ENCODE measurements at regions of chr21 and their contacts with region 1.

Region 1: DNA sequence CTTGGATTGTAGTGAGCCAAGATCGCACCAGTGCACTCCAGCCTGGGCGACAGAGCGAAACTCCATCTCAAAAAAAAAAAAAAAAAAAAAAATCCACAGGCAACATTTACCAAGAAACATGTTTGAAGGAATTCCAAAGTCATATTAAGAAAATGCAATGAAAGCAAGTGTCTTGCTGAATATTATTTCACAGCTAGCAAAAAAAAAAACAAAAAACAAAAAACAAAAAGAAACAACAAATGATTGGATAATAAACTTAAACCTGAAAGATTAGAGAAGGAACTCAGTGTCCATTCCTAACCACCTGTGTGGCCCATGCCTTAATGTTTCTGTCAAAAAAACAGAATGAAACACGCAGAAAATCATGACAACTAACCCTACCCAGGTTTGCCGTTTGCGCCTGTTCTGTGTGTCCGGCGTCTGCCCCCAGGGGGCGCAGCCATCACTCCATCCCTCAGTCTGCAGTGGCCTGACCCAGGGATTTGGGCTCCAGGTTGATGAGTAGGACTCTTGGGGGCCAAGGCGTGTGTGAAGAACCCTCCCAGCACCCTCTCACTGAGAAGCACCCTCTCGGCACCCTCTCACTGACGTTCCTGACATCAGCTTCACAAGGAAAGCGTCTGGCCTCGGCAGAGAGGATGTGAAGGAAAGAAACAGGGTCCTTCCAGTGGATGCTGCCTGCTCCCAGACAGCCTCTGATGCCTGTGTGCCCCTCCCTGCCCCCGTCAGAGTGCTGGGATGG is 19.2 kb upstream of the PTTG1IP start:
- DNase-seq: peak; percentile 82
- ATAC-seq: peak; percentile 89
- H3K4me3 ChIP-seq: no peak overlapping the region
- H3K4me3 Mint-ChIP-seq: no peak overlapping the region
- H3K27ac ChIP-seq: no peak overlapping the region
- H3K27ac Mint-ChIP-seq: no peak overlapping the region
- H3K4me1 ChIP-seq: peaks cover 3 to 16% of the 10 kb centered on the region in 2 donors
- H3K4me1 Mint-ChIP-seq: peaks cover 27% of the 10 kb centered on the region
- H3K27me3 ChIP-seq: no peaks in the 10 kb centered on the region
- H3K27me3 Mint-ChIP-seq: no peaks in the 10 kb centered on the region
- CTCF ChIP-seq: peak; percentile 89

Region 2: DNA sequence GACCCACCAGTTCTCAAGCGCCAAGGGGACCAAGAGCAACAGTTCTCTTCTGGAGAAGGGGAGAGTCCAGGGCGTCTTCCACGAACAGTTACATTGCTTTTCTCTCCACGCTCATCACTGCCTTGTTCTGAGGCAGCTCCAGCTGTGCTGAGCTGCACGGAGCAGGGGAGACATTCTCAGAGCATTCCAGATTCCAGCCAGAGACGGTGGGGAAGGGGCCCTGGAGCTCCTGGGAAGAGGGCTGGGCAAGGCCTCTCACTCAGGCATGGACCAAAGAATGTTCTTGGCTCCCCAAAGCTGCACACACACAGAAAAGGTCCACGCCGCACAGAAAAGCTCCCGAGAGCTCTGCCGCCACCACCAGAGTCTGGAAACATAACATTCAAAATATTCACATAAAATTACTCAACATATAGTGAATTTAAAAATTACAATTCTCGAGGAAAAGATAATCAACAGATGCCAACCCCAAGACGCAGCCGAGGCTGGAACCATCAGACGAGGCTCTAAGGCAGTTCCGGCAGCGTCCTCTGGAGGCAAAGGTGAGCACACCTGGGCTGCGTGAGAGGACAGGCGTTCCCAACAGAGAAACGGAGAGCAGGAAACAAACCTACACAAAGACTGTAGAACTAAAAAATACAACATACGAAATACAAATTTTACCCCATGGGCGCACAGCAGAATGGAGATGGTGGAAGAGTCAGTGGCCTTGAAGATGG is 131.5 kb before region 1 on chr21:
- CTCF ChIA-PET with region 1: no interaction called
- POLR2A ChIA-PET with region 1: no interaction called
- intact Hi-C with region 1: no loop called
- DNase-seq: no peak
- ATAC-seq: no peak
- H3K4me3 ChIP-seq: no peak overlapping the region
- H3K4me3 Mint-ChIP-seq: no peak overlapping the region
- H3K27ac ChIP-seq: no peak overlapping the region
- H3K27ac Mint-ChIP-seq: no peak overlapping the region
- H3K4me1 ChIP-seq: peaks cover 0 to 5% of the 10 kb centered on the region in 2 donors
- H3K4me1 Mint-ChIP-seq: peaks cover 5% of the 10 kb centered on the region
- H3K27me3 ChIP-seq: no peaks in the 10 kb centered on the region
- H3K27me3 Mint-ChIP-seq: no peaks in the 10 kb centered on the region
- CTCF ChIP-seq: no peak

Region 3: DNA sequence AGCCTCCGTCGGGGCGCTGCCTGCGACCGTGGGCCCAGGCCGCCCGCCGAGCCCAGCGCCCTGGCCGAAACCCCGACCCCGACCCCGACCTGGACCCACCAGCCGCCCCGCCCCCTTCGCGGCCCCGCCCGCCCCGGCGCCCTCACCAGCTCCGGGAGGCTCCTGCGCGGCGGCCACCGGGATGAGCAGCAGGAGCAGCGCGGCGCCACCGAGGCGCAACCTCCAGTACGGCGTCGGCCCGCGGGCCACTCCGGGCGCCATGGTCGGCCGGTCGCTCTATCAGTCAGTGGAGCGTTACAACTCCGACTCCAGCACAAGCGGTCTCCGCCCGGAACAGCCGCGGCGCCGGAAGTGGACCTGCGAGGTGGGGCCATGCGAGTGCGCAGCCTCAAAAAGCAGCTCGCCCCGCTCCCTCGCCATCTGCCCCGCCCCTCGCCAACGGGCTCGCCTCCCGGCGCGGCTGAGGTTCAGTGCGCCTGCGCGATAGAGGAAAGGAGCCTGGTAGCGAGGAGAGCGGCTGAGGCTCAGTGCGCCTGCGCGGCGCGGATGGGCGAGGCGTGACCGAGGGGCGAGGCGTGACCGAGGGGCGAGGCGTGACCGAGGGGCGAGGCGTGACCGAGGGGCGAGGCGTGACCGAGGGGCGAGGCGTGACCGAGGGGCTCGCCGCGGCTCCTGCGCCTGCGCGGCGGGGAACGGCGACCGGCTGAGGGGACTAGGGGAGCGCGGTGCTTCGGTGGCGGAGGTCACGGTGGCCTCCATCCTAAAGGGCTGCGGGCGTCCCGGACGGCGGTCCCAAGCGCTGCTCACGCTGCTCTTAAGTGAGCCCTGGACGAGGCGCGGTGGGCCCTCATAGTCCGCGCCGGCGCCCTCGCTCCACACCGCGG is 19.1 kb before region 1 on chr21 and contains the start of gene PTTG1IP:
- CTCF ChIA-PET with region 1: interaction called, 17 read pairs
- POLR2A ChIA-PET with region 1: interaction called, 3 read pairs
- intact Hi-C with region 1: loop called (anchors 2 kb)
- DNase-seq: peak; percentile 99
- ATAC-seq: peak; percentile 83
- H3K4me3 ChIP-seq: peak within 1 kb of the TSS; percentile 73 to 92 (median 81)
- H3K4me3 Mint-ChIP-seq: peak within 1 kb of the TSS; percentile 92
- H3K27ac ChIP-seq: peak within 1 kb of the TSS; percentile 80 to 93
- H3K27ac Mint-ChIP-seq: peak within 1 kb of the TSS; percentile 98
- H3K4me1 ChIP-seq: peaks cover 50 to 56% of the 10 kb centered on the region in 2 donors
- H3K4me1 Mint-ChIP-seq: peaks cover 60% of the 10 kb centered on the region
- H3K27me3 ChIP-seq: no peaks in the 10 kb centered on the region
- H3K27me3 Mint-ChIP-seq: no peaks in the 10 kb centered on the region
- CTCF ChIP-seq: no peak
- total RNA-seq, gene PTTG1IP: 58.6 and 62.9 TPM in 2 replicates

Region 4: GRCh38 chr21:44880762-44881585 is 11.7 kb before region 1 on chr21:
- CTCF ChIA-PET with region 1: interaction called, 14 read pairs
- POLR2A ChIA-PET with region 1: interaction called, 3 read pairs
- intact Hi-C with region 1: no loop called
- DNase-seq: peak; percentile 60
- ATAC-seq: peak; percentile 31
- H3K4me3 ChIP-seq: no peak overlapping the region
- H3K4me3 Mint-ChIP-seq: peak overlapping the region; percentile 61
- H3K27ac ChIP-seq: peak overlapping the region in 1 of 2 donors; percentile 13
- H3K27ac Mint-ChIP-seq: peak overlapping the region; percentile 62
- H3K4me1 ChIP-seq: peaks cover 45 to 49% of the 10 kb centered on the region in 2 donors
- H3K4me1 Mint-ChIP-seq: peaks cover 43% of the 10 kb centered on the region
- H3K27me3 ChIP-seq: no peaks in the 10 kb centered on the region
- H3K27me3 Mint-ChIP-seq: no peaks in the 10 kb centered on the region
- CTCF ChIP-seq: no peak

Region 5: GRCh38 chr21:44911389-44912157 is 18.9 kb after region 1 on chr21:
- CTCF ChIA-PET with region 1: interaction called, 10 read pairs
- POLR2A ChIA-PET with region 1: interaction called, 5 read pairs
- intact Hi-C with region 1: loop called (anchors 2 kb)
- DNase-seq: peak; percentile 58
- ATAC-seq: peak; percentile 40
- H3K4me3 ChIP-seq: peak overlapping the region in 4 of 5 experiments; percentile 1 to 48 (median 32)
- H3K4me3 Mint-ChIP-seq: peak overlapping the region; percentile 41
- H3K27ac ChIP-seq: peak overlapping the region; percentile 79 to 83
- H3K27ac Mint-ChIP-seq: peak overlapping the region; percentile 68
- H3K4me1 ChIP-seq: peaks cover 77 to 89% of the 10 kb centered on the region in 2 donors
- H3K4me1 Mint-ChIP-seq: peaks cover 77% of the 10 kb centered on the region
- H3K27me3 ChIP-seq: no peaks in the 10 kb centered on the region
- H3K27me3 Mint-ChIP-seq: no peaks in the 10 kb centered on the region
- CTCF ChIP-seq: peak; percentile 63

Region 6: DNA sequence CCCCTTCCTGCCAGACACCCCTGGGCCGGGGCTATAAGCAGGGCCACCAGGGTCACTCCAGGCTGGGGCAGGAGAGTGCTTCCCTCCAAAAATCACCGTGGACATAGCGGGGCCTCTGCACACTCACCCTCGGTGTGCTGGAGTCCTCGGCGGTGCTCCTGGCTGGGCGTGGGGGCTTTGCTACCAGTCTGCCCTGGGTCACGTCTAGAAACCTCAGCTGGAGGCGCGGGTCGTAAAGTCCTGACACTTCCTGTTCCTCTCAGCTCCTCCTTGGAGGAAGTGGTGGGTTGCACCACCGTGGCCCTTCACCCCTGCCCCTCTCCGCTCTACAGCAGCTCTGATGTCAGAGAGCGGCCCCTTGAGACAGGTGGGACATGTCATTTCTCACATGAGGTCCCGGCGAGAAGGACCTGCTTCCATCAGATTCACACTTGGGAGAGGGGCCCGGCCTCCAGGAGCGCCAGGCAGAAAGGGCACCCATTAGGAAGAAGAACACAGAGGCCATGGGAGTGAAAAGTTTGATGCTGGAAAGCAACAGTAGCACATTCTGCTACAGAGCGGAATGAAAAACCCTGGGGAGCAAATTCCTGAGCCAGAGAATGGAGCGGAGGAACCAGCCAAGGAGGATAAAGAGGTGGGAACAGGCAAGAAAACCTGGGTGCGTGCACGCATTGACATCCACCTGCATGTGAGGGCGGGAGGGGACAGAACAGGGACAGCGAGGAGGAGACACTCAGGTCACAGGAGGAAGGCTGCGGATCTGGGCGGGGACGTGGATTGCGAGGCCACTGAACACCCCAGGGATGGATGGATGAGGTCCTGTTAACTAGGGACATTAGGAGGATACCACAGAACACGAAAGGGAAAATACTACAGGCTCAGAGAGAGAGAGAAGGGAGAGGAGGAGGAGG is 28.2 kb after region 1 on chr21 and contains the start of gene ITGB2:
- CTCF ChIA-PET with region 1: interaction called, 204 read pairs
- POLR2A ChIA-PET with region 1: no interaction called
- intact Hi-C with region 1: no loop called
- DNase-seq: peak; percentile 83
- ATAC-seq: peak; percentile 89
- H3K4me3 ChIP-seq: peak within 1 kb of the TSS; percentile 74 to 99 (median 87)
- H3K4me3 Mint-ChIP-seq: peak within 1 kb of the TSS; percentile 96
- H3K27ac ChIP-seq: peak within 1 kb of the TSS; percentile 82 to 87
- H3K27ac Mint-ChIP-seq: peak within 1 kb of the TSS; percentile 89
- H3K4me1 ChIP-seq: peaks cover 84 to 92% of the 10 kb centered on the region in 2 donors
- H3K4me1 Mint-ChIP-seq: peaks cover 81% of the 10 kb centered on the region
- H3K27me3 ChIP-seq: no peaks in the 10 kb centered on the region
- H3K27me3 Mint-ChIP-seq: no peaks in the 10 kb centered on the region
- CTCF ChIP-seq: no peak
- total RNA-seq, gene ITGB2: 86.7 and 102 TPM in 2 replicates

Region 7: GRCh38 chr21:45427331-45428271 is 534.9 kb after region 1 on chr21:
- CTCF ChIA-PET with region 1: no interaction called
- POLR2A ChIA-PET with region 1: no interaction called
- intact Hi-C with region 1: no loop called
- DNase-seq: no peak
- ATAC-seq: no peak
- H3K4me3 ChIP-seq: no peak overlapping the region
- H3K4me3 Mint-ChIP-seq: no peak overlapping the region
- H3K27ac ChIP-seq: no peak overlapping the region
- H3K27ac Mint-ChIP-seq: no peak overlapping the region
- H3K4me1 ChIP-seq: no peaks in the 10 kb centered on the region
- H3K4me1 Mint-ChIP-seq: no peaks in the 10 kb centered on the region
- H3K27me3 ChIP-seq: no peaks in the 10 kb centered on the region
- H3K27me3 Mint-ChIP-seq: peaks cover 8% of the 10 kb centered on the region
- CTCF ChIP-seq: no peak